ENCODE measurements at regions of chrX and their contacts with region 1.

Region 1: DNA sequence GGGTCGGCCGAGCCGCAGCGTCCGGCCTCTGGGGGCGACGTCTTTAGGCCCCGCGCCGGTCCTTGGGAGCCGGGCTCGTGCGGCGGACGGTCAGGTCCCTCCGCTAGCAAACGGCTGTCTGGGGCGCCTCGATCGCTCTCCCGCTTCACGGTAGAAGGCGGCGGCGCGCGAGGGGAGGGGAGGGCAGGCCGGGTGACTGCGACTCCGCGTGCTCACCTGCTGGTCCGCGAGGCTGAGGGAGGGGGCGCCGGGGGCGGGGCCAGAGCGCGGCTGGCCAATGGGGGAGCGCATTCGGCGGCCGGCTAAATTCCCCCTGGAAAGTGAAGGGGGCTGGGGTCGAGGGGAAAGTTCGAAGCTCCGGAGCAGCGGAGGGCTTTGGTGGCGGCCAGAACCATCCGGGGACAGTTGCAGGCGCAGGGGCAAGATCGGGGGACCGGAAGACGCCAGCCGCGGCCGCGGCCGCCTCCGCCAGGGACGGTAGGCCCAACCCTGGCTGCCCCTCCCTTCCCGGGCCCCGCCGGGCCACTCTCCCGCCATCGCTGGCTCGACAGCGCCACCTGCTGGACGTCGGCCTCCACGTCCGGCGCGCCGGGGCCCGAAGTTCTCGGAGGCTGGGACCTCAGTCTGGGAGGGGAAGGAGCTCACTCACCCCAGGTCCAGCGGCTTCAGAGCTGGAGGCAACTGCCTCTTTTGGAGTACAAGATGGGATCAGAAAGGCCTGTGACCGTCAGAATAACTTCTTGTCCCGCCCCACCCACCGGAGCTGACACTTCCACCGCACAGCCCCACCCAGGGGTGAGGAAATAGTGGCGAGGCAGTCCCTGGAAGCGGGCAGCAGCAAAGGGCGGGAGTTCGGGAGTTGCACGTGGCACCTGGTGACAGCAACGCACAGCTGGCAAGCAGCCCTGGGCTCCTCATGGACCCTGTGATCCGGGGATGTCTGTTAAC is 49.9 kb downstream of the ELF4 start:
- DNase-seq: peak; percentile 51 to 92 (median 68)
- ATAC-seq: peak; percentile 95
- H3K4me3 ChIP-seq: peak overlapping the region; percentile 51
- H3K4me3 Mint-ChIP-seq: peak overlapping the region; percentile 54 to 79 (median 71)
- H3K27ac ChIP-seq: peak overlapping the region; percentile 60
- H3K27ac Mint-ChIP-seq: peak overlapping the region in 2 of 9 donors; percentile 26 to 76
- H3K4me1 ChIP-seq: no peaks in the 10 kb centered on the region
- H3K4me1 Mint-ChIP-seq: peaks cover 0 to 14% (median 6%) of the 10 kb centered on the region in 7 donors
- H3K27me3 ChIP-seq: no peaks in the 10 kb centered on the region
- H3K27me3 Mint-ChIP-seq: no peaks in the 10 kb centered on the region

Region 2: GRCh38 chrX:129637217-129638109 is 422.9 kb before region 1 on chrX:
- CTCF ChIA-PET with region 1: no interaction called
- POLR2A ChIA-PET with region 1: no interaction called
- intact Hi-C with region 1: loop called in 1 of 2 experiments (anchors 1 kb)
- DNase-seq: peak; percentile 48 to 80 (median 63)
- ATAC-seq: peak; percentile 92
- H3K4me3 ChIP-seq: no peak overlapping the region
- H3K4me3 Mint-ChIP-seq: no peak overlapping the region
- H3K27ac ChIP-seq: no peak overlapping the region
- H3K27ac Mint-ChIP-seq: peak overlapping the region in 3 of 9 donors; percentile 34 to 68 (median 55)
- H3K4me1 ChIP-seq: peaks cover 0 to 4% of the 10 kb centered on the region in 2 donors
- H3K4me1 Mint-ChIP-seq: peaks cover 0 to 10% (median 0%) of the 10 kb centered on the region in 7 donors
- H3K27me3 ChIP-seq: no peaks in the 10 kb centered on the region
- H3K27me3 Mint-ChIP-seq: no peaks in the 10 kb centered on the region

Region 3: DNA sequence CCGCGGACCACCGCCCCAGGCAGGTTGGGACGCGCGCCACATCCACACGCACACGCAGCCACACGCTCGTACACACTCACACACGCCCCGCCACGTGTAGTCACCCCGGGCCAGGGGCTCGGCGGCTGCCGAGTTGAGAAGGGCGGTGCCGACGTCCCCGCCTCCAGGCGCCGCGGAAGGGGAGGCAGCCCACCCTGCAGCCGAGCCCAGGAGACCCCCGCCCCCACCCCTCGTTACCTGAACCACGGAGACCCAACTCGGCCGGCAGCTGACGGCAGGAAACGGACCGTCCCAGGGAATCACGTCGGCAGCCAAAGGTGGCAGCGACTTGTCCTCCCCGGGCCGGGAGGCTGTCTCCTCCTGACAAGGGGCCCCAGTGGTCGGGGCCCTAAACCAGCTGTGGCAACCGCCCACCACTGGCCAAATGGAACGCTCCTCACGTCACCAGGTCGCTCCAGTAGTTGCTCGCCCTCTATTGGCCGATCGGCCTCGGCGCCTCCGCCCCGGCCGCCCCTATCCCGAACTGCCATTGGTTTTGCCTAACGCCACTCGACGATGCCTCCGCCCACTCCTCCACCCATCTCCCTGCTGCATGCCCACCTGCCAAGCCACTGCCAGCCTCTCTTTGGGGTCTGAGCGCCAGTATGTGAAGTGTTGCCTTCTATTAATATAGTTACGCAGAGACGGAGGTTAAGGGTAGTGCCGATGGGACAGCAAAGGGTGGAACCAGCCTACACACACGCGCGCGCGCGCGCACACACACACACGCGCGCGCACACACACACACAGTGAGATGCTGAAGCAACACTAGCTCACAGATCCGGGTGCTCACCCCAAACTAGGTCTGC is 216.7 kb before region 1 on chrX and contains the start of gene ZDHHC9:
- CTCF ChIA-PET with region 1: no interaction called
- POLR2A ChIA-PET with region 1: no interaction called
- intact Hi-C with region 1: loop called in 1 of 2 experiments (anchors 5 kb)
- DNase-seq: peak; percentile 62 to 85 (median 81)
- ATAC-seq: peak; percentile 98
- H3K4me3 ChIP-seq: peak within 1 kb of the TSS; percentile 95
- H3K4me3 Mint-ChIP-seq: peak within 1 kb of the TSS; percentile 86 to 98 (median 92)
- H3K27ac ChIP-seq: peak within 1 kb of the TSS; percentile 76
- H3K27ac Mint-ChIP-seq: peak within 1 kb of the TSS; percentile 68 to 91 (median 80)
- H3K4me1 ChIP-seq: peaks cover 5 to 15% of the 10 kb centered on the region in 2 donors
- H3K4me1 Mint-ChIP-seq: peaks cover 4 to 39% (median 28%) of the 10 kb centered on the region in 7 donors
- H3K27me3 ChIP-seq: no peaks in the 10 kb centered on the region
- H3K27me3 Mint-ChIP-seq: no peaks in the 10 kb centered on the region
- total RNA-seq, gene ZDHHC9: 4.9 to 9.1 (median 7.1) TPM

Region 4: GRCh38 chrX:129905787-129906580 is 154.4 kb before region 1 on chrX and contains the start of gene UTP14A:
- CTCF ChIA-PET with region 1: no interaction called
- POLR2A ChIA-PET with region 1: no interaction called
- intact Hi-C with region 1: no loop called
- DNase-seq: peak; percentile 44 to 86 (median 78)
- ATAC-seq: peak; percentile 98
- H3K4me3 ChIP-seq: peak within 1 kb of the TSS; percentile 85
- H3K4me3 Mint-ChIP-seq: peak within 1 kb of the TSS; percentile 85 to 97 (median 92)
- H3K27ac ChIP-seq: peak within 1 kb of the TSS; percentile 76
- H3K27ac Mint-ChIP-seq: peak within 1 kb of the TSS; percentile 81 to 95 (median 90)
- H3K4me1 ChIP-seq: peaks cover 3 to 8% of the 10 kb centered on the region in 2 donors
- H3K4me1 Mint-ChIP-seq: peaks cover 0 to 17% (median 4%) of the 10 kb centered on the region in 7 donors
- H3K27me3 ChIP-seq: no peaks in the 10 kb centered on the region
- H3K27me3 Mint-ChIP-seq: no peaks in the 10 kb centered on the region
- total RNA-seq, gene UTP14A: 11.3 to 28.6 (median 22.4) TPM

Region 5: DNA sequence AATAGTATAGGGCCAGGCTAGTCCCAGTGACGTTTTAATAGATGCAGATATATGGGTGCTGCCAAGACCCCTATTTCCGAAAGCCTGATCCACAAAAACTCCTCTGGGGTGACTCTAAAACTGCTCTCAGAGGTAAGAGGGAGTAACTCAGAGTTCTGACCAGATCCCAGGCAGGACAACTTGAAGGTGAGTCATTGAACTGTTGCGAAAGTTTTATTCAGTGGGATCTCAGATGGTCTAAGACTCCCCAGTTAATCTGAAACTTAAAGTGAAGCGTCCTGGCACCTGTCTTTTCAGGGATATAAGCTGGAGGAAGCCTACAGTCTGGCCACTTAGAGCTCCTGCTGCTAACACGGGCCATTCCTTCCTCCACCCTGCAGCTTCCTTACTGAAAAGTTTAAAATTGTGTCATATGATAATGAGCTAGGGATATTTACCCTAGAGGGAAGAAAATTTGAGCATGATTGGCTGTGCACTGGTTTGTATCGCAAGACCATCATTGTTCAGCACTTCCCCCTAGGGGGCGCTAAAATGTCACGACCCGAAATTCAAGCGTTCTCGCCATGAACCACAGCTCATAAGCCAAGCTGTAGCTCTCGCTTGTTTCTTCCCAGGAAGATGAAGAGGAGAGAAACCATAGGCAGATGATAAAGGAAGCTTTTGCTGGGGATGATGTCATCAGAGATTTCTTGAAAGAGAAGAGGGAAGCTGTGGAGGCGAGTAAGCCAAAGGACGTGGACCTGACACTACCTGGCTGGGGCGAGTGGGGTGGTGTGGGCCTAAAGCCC is 134.9 kb before region 1 on chrX:
- CTCF ChIA-PET with region 1: interaction called, 25 read pairs
- POLR2A ChIA-PET with region 1: interaction called, 3 read pairs
- intact Hi-C with region 1: loop called (anchors 1 kb)
- DNase-seq: peak; percentile 18 to 74 (median 67)
- ATAC-seq: peak; percentile 89
- H3K4me3 ChIP-seq: no peak overlapping the region
- H3K4me3 Mint-ChIP-seq: no peak overlapping the region
- H3K27ac ChIP-seq: no peak overlapping the region
- H3K27ac Mint-ChIP-seq: peak overlapping the region in 1 of 9 donors; percentile 41
- H3K4me1 ChIP-seq: no peaks in the 10 kb centered on the region
- H3K4me1 Mint-ChIP-seq: peaks cover 0 to 5% (median 0%) of the 10 kb centered on the region in 7 donors
- H3K27me3 ChIP-seq: no peaks in the 10 kb centered on the region
- H3K27me3 Mint-ChIP-seq: no peaks in the 10 kb centered on the region

Region 6: DNA sequence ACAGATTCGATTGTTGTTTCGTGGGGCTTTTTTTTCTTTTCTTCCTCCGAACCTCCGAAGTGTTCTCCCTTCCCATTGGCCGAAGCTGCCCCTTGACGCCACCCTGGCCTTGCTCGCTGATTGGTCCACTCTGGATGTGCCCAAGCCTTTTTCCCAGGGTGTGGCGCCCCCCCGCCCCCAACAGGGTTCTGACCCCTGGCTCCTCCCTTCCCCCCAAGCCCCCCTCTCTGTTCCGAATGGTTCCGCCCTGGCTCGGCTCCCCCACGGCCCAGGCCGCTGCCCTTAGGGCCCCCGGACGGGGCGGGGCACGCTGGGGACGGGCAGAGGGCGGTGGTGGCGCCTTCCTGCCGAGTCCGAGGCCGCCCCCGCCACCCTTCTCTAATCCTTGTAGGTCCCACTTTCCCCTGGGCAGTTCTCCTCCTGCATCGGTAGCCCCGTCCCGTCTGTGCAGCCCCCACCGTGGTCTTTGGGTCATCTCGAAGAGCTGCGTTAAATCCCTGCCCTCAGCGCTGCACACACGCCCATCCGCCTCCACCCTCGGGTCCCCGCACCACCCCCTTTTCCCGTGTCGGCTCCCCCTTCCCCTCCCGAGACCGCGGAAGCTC is 128.9 kb before region 1 on chrX:
- CTCF ChIA-PET with region 1: interaction called, 25 read pairs
- POLR2A ChIA-PET with region 1: no interaction called
- intact Hi-C with region 1: loop called in 1 of 2 experiments (anchors 1 kb)
- DNase-seq: peak; percentile 18 to 58 (median 33)
- ATAC-seq: peak; percentile 75
- H3K4me3 ChIP-seq: peak overlapping the region; percentile 61
- H3K4me3 Mint-ChIP-seq: peak overlapping the region; percentile 66 to 89 (median 80)
- H3K27ac ChIP-seq: peak overlapping the region; percentile 59
- H3K27ac Mint-ChIP-seq: peak overlapping the region; percentile 70 to 92 (median 85)
- H3K4me1 ChIP-seq: no peaks in the 10 kb centered on the region
- H3K4me1 Mint-ChIP-seq: peaks cover 0 to 6% (median 5%) of the 10 kb centered on the region in 7 donors
- H3K27me3 ChIP-seq: no peaks in the 10 kb centered on the region
- H3K27me3 Mint-ChIP-seq: peaks cover 0 to 20% (median 0%) of the 10 kb centered on the region in 5 donors

Region 7: GRCh38 chrX:129945146-129945545 is 115.2 kb before region 1 on chrX:
- CTCF ChIA-PET with region 1: no interaction called
- POLR2A ChIA-PET with region 1: no interaction called
- intact Hi-C with region 1: no loop called
- DNase-seq: no peak
- ATAC-seq: no peak
- H3K4me3 ChIP-seq: no peak overlapping the region
- H3K4me3 Mint-ChIP-seq: no peak overlapping the region
- H3K27ac ChIP-seq: no peak overlapping the region
- H3K27ac Mint-ChIP-seq: no peak overlapping the region
- H3K4me1 ChIP-seq: no peaks in the 10 kb centered on the region
- H3K4me1 Mint-ChIP-seq: peaks cover 0 to 3% (median 0%) of the 10 kb centered on the region in 7 donors
- H3K27me3 ChIP-seq: no peaks in the 10 kb centered on the region
- H3K27me3 Mint-ChIP-seq: peaks cover 0 to 10% (median 0%) of the 10 kb centered on the region in 5 donors

Region 8: DNA sequence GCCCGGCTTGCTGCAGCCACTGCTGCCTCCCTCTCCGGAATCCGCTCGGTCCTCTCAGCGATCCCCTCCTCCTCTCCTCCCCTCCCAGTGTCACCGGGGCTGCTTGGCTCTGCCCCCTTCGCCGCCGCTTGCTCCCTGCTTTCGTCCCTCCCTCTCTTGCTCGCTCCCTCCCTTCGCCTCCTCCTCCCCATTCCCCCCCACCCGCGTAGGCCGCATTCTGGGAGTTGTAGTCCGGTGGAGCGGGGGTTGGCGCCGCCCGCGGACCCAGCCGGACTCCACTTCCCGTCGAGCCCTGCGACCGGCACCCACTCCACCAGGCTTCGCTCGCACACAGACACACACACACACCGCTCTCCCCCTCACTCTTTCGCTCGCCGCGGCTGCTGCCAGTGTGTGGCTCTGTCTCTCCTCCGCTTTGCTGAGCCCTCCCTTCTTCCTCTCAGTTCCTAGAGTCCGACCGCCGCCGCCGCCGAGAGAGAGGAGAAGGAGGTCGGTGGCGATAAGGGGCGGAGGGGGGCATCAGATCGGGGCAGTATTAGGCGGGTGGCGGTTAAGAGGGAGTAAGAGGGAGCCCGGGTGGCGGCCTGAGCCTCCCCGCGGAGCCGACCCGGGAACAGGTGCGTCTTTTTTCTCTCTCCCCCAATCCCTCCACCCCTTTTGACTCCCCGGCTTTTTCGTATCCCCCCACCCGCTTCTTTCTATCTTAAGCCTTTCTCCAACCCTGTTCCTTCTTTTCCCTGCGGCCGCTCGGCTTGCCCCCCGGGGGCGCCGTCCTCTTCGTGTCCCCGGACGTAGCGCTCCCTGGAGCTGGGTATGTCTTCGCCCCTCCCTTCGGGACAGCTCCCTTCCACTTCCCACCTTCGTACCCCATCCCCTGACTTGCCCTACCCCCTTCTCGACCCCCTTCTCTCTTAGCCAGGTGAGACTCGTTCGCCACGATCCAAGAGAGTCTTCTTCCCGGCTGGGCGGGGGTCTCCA is 77.8 kb before region 1 on chrX and contains the start of gene BCORL1:
- CTCF ChIA-PET with region 1: no interaction called
- POLR2A ChIA-PET with region 1: no interaction called
- intact Hi-C with region 1: loop called (anchors 1 to 2 kb)
- DNase-seq: peak; percentile 62 to 89 (median 84)
- ATAC-seq: peak; percentile 96
- H3K4me3 ChIP-seq: peak within 1 kb of the TSS; percentile 61
- H3K4me3 Mint-ChIP-seq: peak within 1 kb of the TSS in 1 of 10 donors; percentile 85
- H3K27ac ChIP-seq: no peak within 1 kb of the TSS
- H3K27ac Mint-ChIP-seq: peak within 1 kb of the TSS in 7 of 9 donors; percentile 31 to 82 (median 59)
- H3K4me1 ChIP-seq: no peaks in the 10 kb centered on the region
- H3K4me1 Mint-ChIP-seq: peaks cover 19 to 34% (median 27%) of the 10 kb centered on the region in 7 donors
- H3K27me3 ChIP-seq: no peaks in the 10 kb centered on the region
- H3K27me3 Mint-ChIP-seq: peaks cover 0 to 30% (median 0%) of the 10 kb centered on the region in 5 donors
- total RNA-seq, gene BCORL1: 5.8 to 8.9 (median 8.2) TPM

Region 9: DNA sequence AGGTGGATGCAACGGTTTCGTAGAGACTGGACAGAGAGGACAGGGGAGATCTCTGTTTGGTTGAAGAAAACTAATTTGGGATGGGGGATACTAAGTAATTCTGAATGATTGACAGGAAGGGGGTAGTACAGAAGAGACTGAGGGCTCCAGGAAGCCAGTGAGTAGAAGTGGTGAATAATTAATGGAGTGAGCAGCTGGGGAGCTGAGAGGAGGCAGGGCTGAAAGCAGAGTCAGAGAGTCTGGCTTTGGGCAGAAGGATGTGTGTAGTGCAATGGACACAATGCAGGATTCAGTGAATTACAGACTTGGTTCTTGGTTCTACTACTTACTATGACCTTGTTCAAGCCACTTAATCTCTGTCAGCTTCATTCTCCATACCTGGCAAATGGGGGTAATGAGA is 503.1 kb after region 1 on chrX:
- CTCF ChIA-PET with region 1: no interaction called
- POLR2A ChIA-PET with region 1: no interaction called
- intact Hi-C with region 1: no loop called
- DNase-seq: no peak
- ATAC-seq: no peak
- H3K4me3 ChIP-seq: no peak overlapping the region
- H3K4me3 Mint-ChIP-seq: no peak overlapping the region
- H3K27ac ChIP-seq: no peak overlapping the region
- H3K27ac Mint-ChIP-seq: no peak overlapping the region
- H3K4me1 ChIP-seq: no peaks in the 10 kb centered on the region
- H3K4me1 Mint-ChIP-seq: peaks cover 0 to 1% (median 0%) of the 10 kb centered on the region in 7 donors
- H3K27me3 ChIP-seq: no peaks in the 10 kb centered on the region
- H3K27me3 Mint-ChIP-seq: peaks cover 0 to 14% (median 7%) of the 10 kb centered on the region in 5 donors

Region 10: DNA sequence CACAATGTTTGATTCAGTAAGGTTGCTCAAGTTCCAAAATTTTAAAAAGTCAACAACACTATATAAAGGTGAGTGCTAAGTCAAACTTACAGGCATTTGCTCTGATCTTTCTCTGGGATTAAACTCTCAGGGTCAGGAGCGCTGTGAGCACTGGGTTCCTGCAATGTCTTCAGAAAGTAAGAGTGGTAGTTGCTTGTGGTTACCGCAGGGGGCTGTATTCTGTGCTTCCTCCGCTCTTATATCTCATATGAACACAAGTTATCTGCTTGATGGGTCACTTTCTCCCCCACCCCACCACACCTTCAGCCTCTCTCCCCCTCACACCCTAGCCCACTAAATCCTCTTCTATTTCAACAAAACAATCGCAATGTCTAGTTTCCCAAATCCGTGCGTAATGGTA is 1345.1 kb after region 1 on chrX:
- CTCF ChIA-PET with region 1: no interaction called
- POLR2A ChIA-PET with region 1: no interaction called
- intact Hi-C with region 1: no loop called
- DNase-seq: no peak
- ATAC-seq: no peak
- H3K4me3 ChIP-seq: no peak overlapping the region
- H3K4me3 Mint-ChIP-seq: no peak overlapping the region
- H3K27ac ChIP-seq: no peak overlapping the region
- H3K27ac Mint-ChIP-seq: no peak overlapping the region
- H3K4me1 ChIP-seq: no peaks in the 10 kb centered on the region
- H3K4me1 Mint-ChIP-seq: no peaks in the 10 kb centered on the region
- H3K27me3 ChIP-seq: no peaks in the 10 kb centered on the region
- H3K27me3 Mint-ChIP-seq: peaks cover 0 to 4% (median 0%) of the 10 kb centered on the region in 5 donors

Measured in naive thymus-derived CD4-positive, alpha-beta T cell (primary cell).